ENCODE measurements at regions of chr10 and their contacts with region 1.

Region 1: GRCh38 chr10:102455893-102456471 is 4.6 kb upstream of the C10orf95 start:
- DNase-seq: no peak

Region 2: DNA sequence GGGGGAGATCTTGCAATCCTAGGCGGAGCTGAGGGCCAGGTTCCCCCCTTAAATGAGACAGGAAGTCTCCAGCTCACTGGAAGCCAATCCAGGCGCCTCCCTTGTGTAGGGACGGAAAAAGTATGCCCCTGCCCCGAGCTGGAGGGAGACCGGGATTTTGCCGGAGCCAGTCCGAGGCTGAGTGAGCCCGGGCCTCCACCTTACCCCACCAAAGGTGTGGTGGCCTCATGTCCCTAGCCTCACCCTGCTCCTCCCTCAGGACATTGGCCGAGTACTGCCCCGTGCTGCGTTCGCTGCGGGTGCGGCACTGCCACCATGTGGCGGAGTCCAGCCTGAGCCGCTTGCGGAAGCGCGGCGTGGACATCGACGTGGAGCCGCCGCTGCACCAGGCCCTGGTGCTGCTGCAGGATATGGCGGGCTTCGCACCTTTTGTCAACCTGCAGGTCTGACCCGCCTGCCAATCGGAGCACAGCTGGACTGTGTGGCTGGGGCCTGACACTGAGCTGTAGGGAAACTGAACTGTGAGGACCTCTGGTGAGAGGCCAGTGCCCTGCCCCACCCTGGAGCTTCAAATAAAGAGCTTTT is 33.3 kb before region 1 on chr10:
- intact Hi-C with region 1: loop called in 1 of 2 experiments (anchors 2 kb)
- DNase-seq: peak; percentile 94

Measured in posterior vena cava (tissue), 2 donors.